ENCODE measurements at regions of chr10 and their contacts with region 1.

Region 1: DNA sequence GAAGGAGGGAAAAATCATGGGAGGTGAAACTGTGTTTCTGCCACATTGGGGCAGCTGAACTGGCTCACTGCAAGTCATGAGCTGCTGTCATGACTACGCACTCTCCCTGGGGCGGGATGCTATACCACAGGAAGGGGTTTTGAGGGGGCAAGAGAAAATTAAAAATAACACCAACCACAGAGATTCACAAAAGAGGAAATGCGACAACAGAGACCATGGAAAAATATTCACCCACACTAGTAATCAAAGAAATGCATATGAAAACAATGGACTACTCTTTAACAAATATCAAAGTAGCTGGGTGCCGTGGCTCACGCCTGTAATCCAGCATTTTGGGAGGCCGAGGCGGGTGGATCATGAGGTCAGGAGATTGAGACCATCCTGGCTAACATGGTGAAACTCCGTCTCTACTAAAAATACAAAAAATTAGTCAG is 65.2 kb upstream of the TM9SF3 start:
- DNase-seq: peak; percentile 45
- CTCF ChIP-seq: no peak

Region 2: DNA sequence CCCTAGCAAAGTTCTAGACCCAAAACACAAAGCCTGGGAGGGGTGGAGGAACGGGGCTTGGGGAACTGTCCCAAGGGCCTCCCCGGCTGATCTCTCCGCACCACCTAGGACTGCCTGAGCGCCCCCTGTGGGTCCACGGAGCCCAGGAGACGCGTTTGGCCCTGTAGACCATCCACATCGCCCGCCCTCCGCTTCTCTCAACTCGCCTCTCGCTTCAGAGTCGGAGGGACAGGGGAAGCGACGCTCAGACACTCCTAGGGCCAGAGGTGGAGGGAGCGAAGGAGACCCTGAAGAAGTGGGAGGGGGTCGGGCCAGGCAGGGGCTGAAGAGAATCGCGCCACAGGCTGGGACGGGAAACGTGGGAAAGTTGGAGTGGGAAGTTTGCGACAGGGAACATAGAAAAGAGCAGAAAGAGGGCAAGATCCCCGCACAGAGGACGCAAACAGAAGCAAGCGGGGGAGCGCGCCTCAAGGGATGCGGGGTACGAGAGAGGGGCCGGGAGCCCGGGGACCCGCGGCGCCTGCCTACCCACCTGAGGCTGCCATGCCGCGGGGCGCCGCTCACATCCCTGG is 67.9 kb after region 1 on chr10:
- in situ Hi-C with region 1: loop called (anchors 5 kb)
- DNase-seq: peak; percentile 87
- CTCF ChIP-seq: peak; percentile 94

Region 3: GRCh38 chr10:97016728-97017473 is 364.9 kb after region 1 on chr10:
- in situ Hi-C with region 1: no loop called
- DNase-seq: peak; percentile 76
- CTCF ChIP-seq: no peak